OCI-LY7 (cell line): ENCODE measurements at regions of chr10 and their contacts with region 1.

Region 1: GRCh38 chr10:52483587-52483986 is 169.5 kb downstream of the DKK1 start:
- DNase-seq: no peak
- H3K4me3 ChIP-seq: no peak overlapping the region
- H3K27ac ChIP-seq: no peak overlapping the region
- H3K4me1 ChIP-seq: no peaks in the 10 kb centered on the region
- CTCF ChIP-seq: no peak

Region 2: GRCh38 chr10:52443419-52444388 is 39.9 kb before region 1 on chr10:
- CTCF ChIA-PET with region 1: no interaction called
- POLR2A ChIA-PET with region 1: no interaction called
- intact Hi-C with region 1: loop called (anchors 2 kb)
- DNase-seq: no peak
- H3K4me3 ChIP-seq: no peak overlapping the region
- H3K27ac ChIP-seq: no peak overlapping the region
- H3K4me1 ChIP-seq: no peaks in the 10 kb centered on the region
- CTCF ChIP-seq: no peak